Heart left ventricle (tissue), 16 donors: ENCODE measurements at regions of chr16 and their contacts with region 1.

Region 1: GRCh38 chr16:22165508-22166285 is 3.4 kb downstream of the SDR42E2 start:
- DNase-seq: no peak
- ATAC-seq: peak in 1 of 4 donors; percentile 29
- H3K4me3 ChIP-seq: no peak overlapping the region
- H3K27ac ChIP-seq: no peak overlapping the region
- H3K4me1 ChIP-seq: peaks cover 0 to 7% (median 0%) of the 10 kb centered on the region in 12 donors
- H3K27me3 ChIP-seq: peaks cover 5 to 30% (median 15%) of the 10 kb centered on the region in 9 donors
- CTCF ChIP-seq: no peak
- POLR2A ChIP-seq: no peak

Region 2: GRCh38 chr16:22123759-22124490 is 41.8 kb before region 1 on chr16:
- intact Hi-C with region 1: loop called in 1 of 10 experiments (anchors 2 kb)
- DNase-seq: no peak
- ATAC-seq: no peak
- H3K4me3 ChIP-seq: no peak overlapping the region
- H3K27ac ChIP-seq: no peak overlapping the region
- H3K4me1 ChIP-seq: no peaks in the 10 kb centered on the region
- H3K27me3 ChIP-seq: no peaks in the 10 kb centered on the region
- CTCF ChIP-seq: no peak
- POLR2A ChIP-seq: no peak